GM13977 (cell line): ENCODE measurements at regions of chr4 and their contacts with region 1.

Region 1: GRCh38 chr4:182465979-182466378 is 222.8 kb downstream of the TENM3 start:
- DNase-seq: no peak
- CTCF ChIP-seq: no peak

Region 2: GRCh38 chr4:182203872-182204411 is 262.0 kb before region 1 on chr4:
- in situ Hi-C with region 1: no loop called
- DNase-seq: no peak
- CTCF ChIP-seq: no peak

Region 3: GRCh38 chr4:182806259-182807252 is 340.6 kb after region 1 on chr4:
- in situ Hi-C with region 1: loop called (anchors 10 kb)
- DNase-seq: peak; percentile 87
- CTCF ChIP-seq: peak; percentile 91